Activated B cell treated with CpG ODN at 0.5 μM for 24 hours (primary cell): ENCODE measurements at regions of chr13 and their contacts with region 1.

Region 1: DNA sequence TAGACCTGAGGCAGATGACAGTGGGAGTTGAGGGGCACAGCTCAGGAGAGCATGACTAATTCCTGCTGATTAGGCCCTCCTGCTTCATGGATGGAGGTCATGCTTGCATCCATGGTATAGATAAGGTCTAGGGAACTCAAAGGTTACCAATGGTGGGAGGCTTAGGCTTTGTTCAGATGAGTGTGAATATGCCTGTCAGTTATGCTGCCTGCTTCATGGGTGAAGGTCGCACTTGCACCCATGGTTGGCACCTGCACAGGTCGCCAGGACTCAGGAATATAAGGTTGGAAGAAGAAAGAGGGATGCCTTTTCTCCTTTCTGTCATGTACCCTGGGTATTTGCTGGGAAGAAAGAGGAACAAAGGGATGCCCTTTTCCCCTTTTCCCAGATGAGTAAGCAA is 53.4 kb upstream of the GJB6 start:
- DNase-seq: no peak
- ATAC-seq: no peak
- H3K4me3 Mint-ChIP-seq: no peak overlapping the region
- H3K27ac Mint-ChIP-seq: no peak overlapping the region
- H3K4me1 Mint-ChIP-seq: no peaks in the 10 kb centered on the region
- H3K27me3 Mint-ChIP-seq: no peaks in the 10 kb centered on the region
- CTCF ChIP-seq: no peak

Region 2: DNA sequence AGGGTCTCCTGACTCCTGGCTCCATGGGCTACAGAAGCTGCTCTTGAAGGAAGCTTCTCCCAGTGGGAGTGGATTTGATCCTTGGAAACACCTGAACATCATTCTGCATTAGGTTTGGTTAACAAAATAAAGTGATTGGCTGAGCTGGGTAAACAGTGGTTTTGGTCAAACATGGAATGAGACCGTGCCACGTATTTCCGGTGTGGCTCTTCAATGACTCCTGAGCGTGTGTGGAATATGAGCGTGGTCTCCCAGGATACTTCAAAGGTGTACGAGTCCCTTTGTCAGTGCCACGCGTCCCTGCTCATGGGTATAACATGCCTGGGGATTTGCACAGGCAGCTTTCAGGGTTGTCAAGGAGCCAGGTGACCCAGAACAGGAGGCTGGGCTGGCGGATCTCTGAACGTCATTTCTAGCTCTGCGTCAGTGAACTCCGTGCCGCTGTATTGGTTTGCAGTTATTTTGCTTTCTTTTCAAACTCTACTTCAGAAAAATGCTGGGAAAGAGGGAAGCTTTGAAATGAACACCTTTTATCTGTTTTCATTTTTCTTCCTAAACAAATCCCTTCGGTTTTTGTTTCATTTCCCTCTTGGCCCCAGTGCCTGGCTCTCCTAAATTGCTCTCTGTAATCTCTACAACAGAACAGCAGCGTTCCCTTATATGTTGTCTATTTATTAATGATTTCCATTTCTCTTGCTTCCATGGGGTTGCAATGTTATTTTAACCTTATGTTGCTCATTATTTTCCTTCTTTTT is 27.1 kb before region 1 on chr13:
- CTCF ChIA-PET with region 1: no interaction called
- POLR2A ChIA-PET with region 1: no interaction called
- intact Hi-C with region 1: loop called (anchors 1 kb)
- DNase-seq: no peak
- ATAC-seq: no peak
- H3K4me3 Mint-ChIP-seq: no peak overlapping the region
- H3K27ac Mint-ChIP-seq: no peak overlapping the region
- H3K4me1 Mint-ChIP-seq: no peaks in the 10 kb centered on the region
- H3K27me3 Mint-ChIP-seq: peaks cover 10% of the 10 kb centered on the region
- CTCF ChIP-seq: no peak

Region 3: DNA sequence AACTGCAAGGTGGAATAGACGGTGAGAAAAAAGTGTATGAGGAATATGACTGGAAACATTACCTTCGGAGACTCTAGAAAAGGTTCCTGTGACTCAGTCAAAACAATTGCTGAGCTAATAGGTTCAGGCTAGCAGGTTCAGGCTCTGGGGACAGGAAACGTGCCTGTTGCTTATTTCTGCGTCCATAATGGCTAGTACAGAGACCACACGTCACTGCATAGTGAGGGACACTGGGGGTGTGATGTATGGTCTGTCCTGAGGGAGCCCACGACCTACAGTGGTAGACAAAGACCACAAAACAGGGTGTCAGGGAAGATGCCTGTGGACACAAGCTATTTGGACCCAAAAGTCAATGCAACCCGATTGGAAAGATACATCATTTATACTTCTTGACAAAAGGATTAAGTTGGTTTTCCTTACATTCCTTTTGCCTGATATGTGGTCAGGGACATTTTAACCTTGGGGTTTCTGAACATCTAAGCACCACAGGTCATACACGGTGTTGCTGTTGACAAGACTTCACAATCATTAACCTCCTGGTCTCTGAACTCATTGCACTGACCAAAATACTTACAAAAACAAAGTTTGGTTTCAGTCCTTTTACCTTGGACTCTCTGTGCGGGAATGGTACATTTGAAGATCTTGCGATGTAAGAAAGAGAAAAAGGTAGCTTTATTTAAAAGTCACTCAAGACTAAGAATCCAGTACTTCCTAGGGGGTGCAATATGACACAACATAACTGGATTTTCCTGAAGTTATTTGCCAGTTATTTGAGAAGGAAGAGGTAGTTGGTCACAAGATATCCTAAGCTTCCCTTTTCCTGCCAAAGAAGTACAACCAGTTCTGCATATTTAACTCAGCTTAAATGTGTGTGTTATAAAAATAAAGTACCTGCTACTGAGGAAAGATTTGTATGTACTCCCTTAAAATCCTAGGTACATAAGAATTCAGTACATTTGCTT is 220.2 kb after region 1 on chr13:
- CTCF ChIA-PET with region 1: no interaction called
- POLR2A ChIA-PET with region 1: no interaction called
- intact Hi-C with region 1: no loop called
- DNase-seq: no peak
- ATAC-seq: no peak
- H3K4me3 Mint-ChIP-seq: no peak overlapping the region
- H3K27ac Mint-ChIP-seq: no peak overlapping the region
- H3K4me1 Mint-ChIP-seq: no peaks in the 10 kb centered on the region
- H3K27me3 Mint-ChIP-seq: no peaks in the 10 kb centered on the region
- CTCF ChIP-seq: no peak